ENCODE measurements at regions of chr4 and their contacts with region 1.

Region 1: DNA sequence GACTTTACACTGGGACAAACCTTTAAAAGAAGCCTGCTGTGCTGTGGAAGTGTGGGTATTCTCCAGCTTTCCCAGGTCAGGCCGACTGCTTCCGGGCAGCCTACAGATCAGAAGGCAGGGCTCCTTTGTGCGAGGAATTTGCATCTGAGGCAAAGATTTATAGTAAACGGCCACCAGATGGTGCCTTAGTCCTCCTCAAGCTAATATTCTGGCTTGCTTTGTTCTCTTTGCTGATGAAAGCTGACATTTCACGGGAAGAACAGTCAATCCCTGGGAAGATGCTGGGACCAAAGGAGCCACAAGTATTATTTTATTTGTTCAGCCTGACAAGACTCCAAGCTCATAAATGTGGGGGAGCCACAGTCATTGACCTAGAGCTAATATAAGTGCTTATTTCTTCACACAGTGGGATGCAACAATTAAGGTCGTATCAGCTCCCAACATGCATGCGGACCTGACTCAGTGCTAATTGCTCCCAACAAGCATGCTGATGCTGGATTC is 120.7 kb upstream of the TRIM2 start:
- DNase-seq: peak; percentile 78
- H3K27ac ChIP-seq: no peak overlapping the region
- CTCF ChIP-seq: peak; percentile 68

Region 2: DNA sequence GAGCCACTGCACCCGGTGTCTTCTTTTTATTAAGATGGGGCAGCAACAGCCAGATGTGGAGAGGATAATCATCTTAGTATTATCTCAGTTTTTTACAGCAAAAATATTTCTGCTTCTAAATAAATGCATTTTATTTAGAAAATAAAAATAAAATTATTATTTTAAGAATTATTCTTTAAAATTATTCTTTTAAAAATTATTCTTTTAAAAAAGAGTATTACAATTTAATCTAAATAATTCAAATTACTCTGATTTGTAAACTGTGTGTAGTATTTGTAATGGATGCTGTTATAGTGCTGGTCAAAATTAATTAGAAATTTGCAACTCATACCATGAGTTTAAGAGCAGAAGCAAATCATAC is 236.1 kb before region 1 on chr4:
- CTCF ChIA-PET with region 1: interaction called, 13 read pairs
- POLR2A ChIA-PET with region 1: no interaction called
- DNase-seq: no peak
- H3K27ac ChIP-seq: no peak overlapping the region
- CTCF ChIP-seq: no peak

Region 3: DNA sequence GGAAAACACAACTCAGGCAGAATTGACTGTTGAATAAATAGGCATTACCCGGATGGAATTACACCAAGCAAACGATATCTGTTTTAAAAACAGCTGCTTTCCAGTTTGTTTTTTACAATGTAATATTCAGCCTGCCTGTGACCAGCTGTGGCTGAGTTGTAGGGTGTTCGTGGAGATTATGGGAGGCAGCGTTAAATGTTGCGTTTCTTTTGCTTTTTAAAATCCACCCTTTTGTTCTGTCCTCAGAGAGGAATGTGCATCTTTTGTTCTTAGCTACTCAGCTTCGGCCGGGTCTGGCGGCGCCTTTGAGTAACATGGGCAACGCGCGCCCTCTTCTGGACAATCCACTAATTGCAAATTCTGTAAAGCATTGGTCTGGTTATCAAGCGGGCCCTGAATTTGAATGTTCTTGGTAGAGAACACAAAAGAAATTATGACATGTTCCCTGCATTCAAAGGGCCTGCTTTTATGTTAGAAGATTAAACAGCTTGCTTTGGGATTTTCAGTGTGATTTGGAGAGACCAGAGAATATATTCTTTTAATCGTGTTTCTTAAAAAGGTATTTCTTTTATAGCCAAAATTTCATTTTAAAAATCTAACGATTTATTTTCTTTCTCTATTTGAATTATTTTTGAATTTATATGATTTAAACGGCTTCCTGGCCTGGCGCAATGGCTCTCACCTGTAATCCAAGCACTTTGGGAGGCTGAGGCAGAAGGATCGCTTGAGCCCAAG is 44.4 kb after region 1 on chr4:
- CTCF ChIA-PET with region 1: interaction called, 22 read pairs
- POLR2A ChIA-PET with region 1: no interaction called
- DNase-seq: peak; percentile 75
- H3K27ac ChIP-seq: no peak overlapping the region
- CTCF ChIP-seq: peak; percentile 86